ENCODE measurements at regions of chr14 and their contacts with region 1.

Region 1: DNA sequence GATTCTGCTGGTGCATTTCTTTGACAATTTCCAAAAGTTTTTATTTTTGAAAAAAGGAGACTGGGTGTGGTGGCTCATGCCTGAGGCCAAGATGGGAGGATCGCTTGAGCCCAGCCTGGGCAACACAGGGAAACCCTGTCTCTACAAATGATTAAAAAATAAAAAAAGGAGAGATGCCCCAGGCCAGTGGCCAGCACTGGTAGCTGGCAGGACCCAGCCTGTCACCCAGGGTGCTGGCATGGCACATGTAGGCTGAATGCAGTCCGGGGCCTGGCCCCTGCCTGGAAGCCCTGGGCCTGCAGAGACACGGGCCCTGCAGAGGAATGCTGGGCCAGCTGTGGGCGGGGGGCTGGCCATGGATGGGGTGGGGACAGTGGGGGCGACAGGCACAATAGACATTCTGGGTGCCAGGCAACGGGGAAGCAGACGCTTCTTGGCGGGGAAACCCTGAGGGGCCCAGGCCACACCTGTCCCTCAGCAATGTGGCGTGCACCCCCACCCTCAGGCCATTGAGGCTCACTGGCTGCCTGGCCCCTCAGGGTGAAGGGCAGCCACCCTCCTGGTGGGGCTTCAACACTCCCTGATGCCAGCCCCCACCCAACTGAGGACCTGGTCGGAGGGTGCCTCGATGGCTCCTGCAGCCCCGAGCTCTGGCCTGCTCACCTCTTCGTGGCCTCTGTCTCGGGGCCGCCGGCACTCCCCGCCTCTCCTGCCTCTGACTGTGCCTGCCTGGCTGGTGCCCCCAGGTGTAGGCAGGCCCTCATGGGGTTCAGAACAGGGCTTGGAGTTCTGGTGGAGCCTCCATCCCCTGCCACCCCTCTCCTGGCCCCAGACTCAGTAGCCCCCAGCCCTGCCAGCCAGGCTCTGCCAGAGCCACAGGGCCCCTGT is 12.1 kb downstream of the TRMT61A start:
- DNase-seq: no peak
- H3K4me3 Mint-ChIP-seq: peak overlapping the region; percentile 56
- H3K27ac Mint-ChIP-seq: peak overlapping the region; percentile 85
- H3K4me1 Mint-ChIP-seq: no peaks in the 10 kb centered on the region
- H3K27me3 Mint-ChIP-seq: no peaks in the 10 kb centered on the region
- CTCF ChIP-seq: no peak

Region 2: DNA sequence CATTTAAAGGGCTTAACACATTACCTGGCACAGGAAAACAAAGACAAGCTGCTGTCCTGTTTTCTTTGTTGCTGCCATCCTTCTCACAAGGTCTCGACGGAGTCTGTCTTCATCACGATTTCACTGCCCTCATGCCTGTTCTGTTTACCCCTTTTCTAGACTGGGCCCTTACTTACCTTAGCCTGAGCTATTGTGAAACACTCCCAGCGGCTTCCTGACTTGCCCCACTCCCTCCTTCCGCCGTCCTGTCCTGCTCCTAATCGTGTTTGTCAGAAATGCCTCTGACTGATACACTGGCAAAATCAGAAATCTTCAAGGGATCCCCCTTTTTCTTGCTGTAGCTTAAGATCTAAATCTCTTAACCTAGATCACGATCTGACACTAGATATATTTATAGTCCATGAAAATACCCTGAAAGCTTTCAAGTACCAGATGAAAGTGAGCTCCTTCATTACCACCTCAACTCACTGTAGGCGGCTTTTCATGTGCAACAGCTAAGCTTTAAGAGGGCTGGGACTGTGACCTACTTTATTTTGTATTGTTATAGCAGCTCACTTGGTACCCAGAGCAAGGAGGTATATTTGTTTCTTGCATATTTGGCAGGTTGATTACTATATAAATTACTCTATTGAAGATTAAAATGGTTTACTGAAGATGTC is 1146.2 kb before region 1 on chr14:
- CTCF ChIA-PET with region 1: no interaction called
- intact Hi-C with region 1: no loop called
- DNase-seq: no peak
- H3K4me3 Mint-ChIP-seq: no peak overlapping the region
- H3K27ac Mint-ChIP-seq: no peak overlapping the region
- H3K4me1 Mint-ChIP-seq: peaks cover 10% of the 10 kb centered on the region
- H3K27me3 Mint-ChIP-seq: no peaks in the 10 kb centered on the region
- CTCF ChIP-seq: no peak

Region 3: GRCh38 chr14:103528587-103529382 is 12.3 kb before region 1 on chr14 and contains the start of gene TRMT61A:
- CTCF ChIA-PET with region 1: interaction called, 10 read pairs
- intact Hi-C with region 1: no loop called
- DNase-seq: peak; percentile 80
- H3K4me3 Mint-ChIP-seq: peak within 1 kb of the TSS; percentile 74
- H3K27ac Mint-ChIP-seq: peak within 1 kb of the TSS; percentile 70
- H3K4me1 Mint-ChIP-seq: peaks cover 33% of the 10 kb centered on the region
- H3K27me3 Mint-ChIP-seq: no peaks in the 10 kb centered on the region
- CTCF ChIP-seq: no peak
- total RNA-seq, gene TRMT61A: 25.9 and 28.0 TPM in 2 replicates

Measured in Calu3 (cell line).